GM12878 (cell line): ENCODE measurements at regions of chr19 and their contacts with region 1.

Region 1: DNA sequence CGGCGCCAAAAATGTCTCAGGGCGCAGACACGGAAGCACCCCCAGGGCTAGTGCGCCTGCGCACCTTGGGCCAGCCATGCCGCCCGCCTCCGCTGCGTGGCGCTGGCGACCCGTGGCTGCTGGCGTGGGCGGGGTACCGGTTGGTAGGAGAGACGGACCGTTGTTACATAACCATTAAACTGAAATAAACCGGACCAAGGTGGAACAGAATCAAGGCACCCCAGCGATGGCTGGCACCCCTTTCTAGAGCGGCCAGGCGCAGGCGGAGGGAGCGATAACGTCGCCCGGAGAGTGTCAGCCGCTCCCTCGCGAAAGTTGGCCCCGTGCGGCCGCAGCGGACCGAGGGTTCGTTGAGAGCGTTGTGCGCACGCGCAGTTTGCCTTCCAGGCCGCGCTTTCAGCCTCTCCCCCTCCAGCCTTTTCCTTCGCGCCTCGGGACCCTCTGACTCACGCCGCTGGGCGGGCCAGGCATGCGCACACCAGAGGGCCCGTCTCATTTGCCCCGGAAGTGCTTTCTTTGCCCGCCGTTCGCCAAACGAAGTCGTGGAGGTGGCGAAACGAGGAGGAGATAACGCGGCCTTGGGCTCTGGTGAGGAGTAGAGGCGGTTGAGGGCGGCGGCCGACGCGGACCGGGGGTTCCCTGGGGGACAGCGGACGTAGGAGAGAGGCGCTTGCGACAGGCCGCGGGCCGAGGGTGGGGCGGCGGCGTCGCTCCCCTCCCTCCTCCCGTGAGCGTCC is at the starts of genes PLEKHJ1 and SF3A2:
- DNase-seq: peak; percentile 93
- ATAC-seq: peak; percentile 83
- H3K4me3 ChIP-seq: peak within 1 kb of the TSS; percentile 99
- H3K27ac ChIP-seq: peak within 1 kb of the TSS; percentile 94
- H3K4me1 ChIP-seq: peaks cover 24% of the 10 kb centered on the region
- H3K27me3 ChIP-seq: no peaks in the 10 kb centered on the region
- CTCF ChIP-seq: peak; percentile 99 to 100 (median 99); a peak in 5 of 6 replicates
- EP300 ChIP-seq: no peak
- POLR2A ChIP-seq: peak; percentile 93
- RAD21 ChIP-seq: peak; percentile 94
- polyA plus RNA-seq, gene PLEKHJ1: 1.3 to 6.9 TPM
- polyA plus RNA-seq, gene SF3A2: 0.33 to 0.55 TPM

Region 2: DNA sequence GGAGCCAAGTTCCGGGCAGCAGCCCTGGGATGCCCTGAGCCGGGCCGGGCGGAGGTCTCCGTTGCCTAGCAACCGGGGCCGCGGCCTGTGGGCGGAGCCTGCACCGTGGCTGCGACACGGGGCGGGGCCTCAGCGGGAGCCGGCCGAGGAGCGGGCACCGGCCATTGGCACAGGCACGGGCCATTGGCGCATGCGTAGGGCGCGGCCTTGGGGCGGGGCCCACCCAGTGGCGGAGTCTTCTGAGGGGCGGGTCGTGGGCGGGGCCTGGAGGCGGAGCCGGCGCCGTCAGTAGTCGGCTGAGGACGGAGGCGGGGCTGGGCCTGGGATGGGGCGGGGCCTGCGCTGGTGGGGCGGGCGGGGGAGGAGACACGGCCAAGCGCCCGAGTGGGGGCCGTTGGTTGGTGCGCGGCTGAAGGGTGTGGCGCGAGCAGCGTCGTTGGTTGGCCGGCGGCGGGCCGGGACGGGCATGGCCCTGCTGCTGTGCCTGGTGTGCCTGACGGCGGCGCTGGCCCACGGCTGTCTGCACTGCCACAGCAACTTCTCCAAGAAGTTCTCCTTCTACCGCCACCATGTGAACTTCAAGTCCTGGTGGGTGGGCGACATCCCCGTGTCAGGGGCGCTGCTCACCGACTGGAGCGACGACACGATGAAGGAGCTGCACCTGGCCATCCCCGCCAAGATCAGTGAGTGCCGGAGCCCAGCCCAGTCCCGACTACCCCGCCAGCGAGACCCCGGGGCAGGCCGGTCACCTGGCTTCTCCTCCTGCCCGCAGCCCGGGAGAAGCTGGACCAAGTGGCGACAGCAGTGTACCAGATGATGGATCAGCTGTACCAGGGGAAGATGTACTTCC is 139.8 kb before region 1 on chr19 and contains the start of gene IZUMO4:
- CTCF ChIA-PET with region 1: no interaction called
- POLR2A ChIA-PET with region 1: interaction called, 7 read pairs
- RAD21 ChIA-PET with region 1: no interaction called
- SMC1A ChIA-PET with region 1: no interaction called
- in situ Hi-C with region 1: no loop called
- intact Hi-C with region 1: loop called (anchors 10 kb)
- DNase-seq: peak; percentile 71
- ATAC-seq: peak; percentile 83
- H3K4me3 ChIP-seq: peak within 1 kb of the TSS; percentile 93
- H3K27ac ChIP-seq: peak within 1 kb of the TSS; percentile 93
- H3K4me1 ChIP-seq: peaks cover 21% of the 10 kb centered on the region
- H3K27me3 ChIP-seq: no peaks in the 10 kb centered on the region
- CTCF ChIP-seq: peak; percentile 41 to 73 (median 54)
- EP300 ChIP-seq: no peak
- POLR2A ChIP-seq: no peak; the same call in 1 of the 2 replicates
- RAD21 ChIP-seq: no peak
- polyA plus RNA-seq, gene IZUMO4: 0.53 to 1.9 TPM

Region 3: DNA sequence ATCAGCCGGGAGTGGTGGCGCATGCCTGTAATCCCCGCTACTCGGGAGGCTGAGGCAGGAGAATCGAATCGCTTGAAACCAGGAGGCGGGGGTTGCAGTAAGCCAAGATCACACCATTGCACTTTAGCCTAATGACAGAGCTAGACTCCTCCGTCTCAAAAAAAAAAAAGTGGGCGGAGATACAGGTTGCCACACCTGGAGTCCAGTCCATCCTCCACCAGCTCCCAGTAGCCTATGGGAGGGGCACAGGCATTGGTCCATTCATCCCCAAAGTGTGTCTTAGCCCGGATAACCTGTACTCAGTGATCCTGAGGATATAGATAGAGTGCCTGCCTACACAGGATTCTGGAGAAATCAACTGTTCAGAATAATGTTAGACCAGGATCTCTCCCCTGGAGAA is 76.1 kb before region 1 on chr19:
- CTCF ChIA-PET with region 1: interaction called, 35 read pairs
- POLR2A ChIA-PET with region 1: interaction called, 4 read pairs
- RAD21 ChIA-PET with region 1: interaction called, 39 read pairs
- SMC1A ChIA-PET with region 1: interaction called, 10 read pairs
- in situ Hi-C with region 1: no loop called
- intact Hi-C with region 1: loop called (anchors 2 kb)
- DNase-seq: no peak
- ATAC-seq: no peak
- H3K4me3 ChIP-seq: no peak overlapping the region
- H3K27ac ChIP-seq: no peak overlapping the region
- H3K4me1 ChIP-seq: no peaks in the 10 kb centered on the region; the same call in 1 of the 2 replicates
- H3K27me3 ChIP-seq: no peaks in the 10 kb centered on the region
- CTCF ChIP-seq: no peak
- EP300 ChIP-seq: no peak
- POLR2A ChIP-seq: no peak
- RAD21 ChIP-seq: no peak

Region 4: DNA sequence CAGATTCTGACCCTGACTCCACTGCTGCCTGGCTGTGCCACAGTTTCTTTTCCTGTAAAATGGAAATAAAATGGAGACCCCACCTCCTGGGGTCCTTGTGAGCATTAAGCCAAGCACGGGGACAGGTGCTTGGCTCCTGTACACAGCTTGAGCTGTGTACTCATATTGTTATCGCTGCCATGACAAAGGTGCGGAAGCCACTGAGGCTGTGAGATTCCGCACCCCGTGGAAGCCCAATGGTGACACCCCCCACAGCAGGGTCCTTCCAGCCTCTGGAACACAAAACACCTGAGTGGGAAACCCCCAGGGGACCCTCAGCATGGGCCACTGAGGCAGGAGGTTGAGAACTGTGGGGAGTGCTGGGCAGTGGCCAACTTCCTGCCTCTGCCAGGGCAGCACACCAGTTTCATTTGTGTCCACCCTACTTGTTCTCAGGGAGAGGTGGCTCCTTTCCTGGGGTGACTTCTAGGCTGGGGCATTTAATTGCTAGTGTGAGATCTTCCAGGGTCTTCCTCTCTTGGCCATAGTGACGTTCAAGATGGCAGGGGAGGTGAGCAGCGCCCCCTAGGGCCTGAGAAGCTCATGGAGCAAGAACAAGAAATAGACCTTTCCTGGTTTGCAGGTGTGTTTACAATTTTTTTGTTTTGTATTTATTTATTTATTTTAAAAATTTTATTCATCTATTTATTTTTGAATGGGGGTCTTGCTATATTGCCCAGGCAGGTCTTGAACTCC is 25.1 kb after region 1 on chr19:
- CTCF ChIA-PET with region 1: interaction called, 130 read pairs
- POLR2A ChIA-PET with region 1: interaction called, 54 read pairs
- RAD21 ChIA-PET with region 1: interaction called, 72 read pairs
- SMC1A ChIA-PET with region 1: interaction called, 46 read pairs
- in situ Hi-C with region 1: no loop called
- intact Hi-C with region 1: no loop called
- DNase-seq: no peak
- ATAC-seq: peak; percentile 17; the same call in 1 of the 3 replicates
- H3K4me3 ChIP-seq: no peak overlapping the region
- H3K27ac ChIP-seq: no peak overlapping the region
- H3K4me1 ChIP-seq: peaks cover 25% of the 10 kb centered on the region
- H3K27me3 ChIP-seq: no peaks in the 10 kb centered on the region
- CTCF ChIP-seq: peak; percentile 56 to 77 (median 76)
- EP300 ChIP-seq: no peak
- POLR2A ChIP-seq: no peak
- RAD21 ChIP-seq: peak; percentile 50

Region 5: GRCh38 chr19:2315818-2316353 is 79.4 kb after region 1 on chr19:
- CTCF ChIA-PET with region 1: interaction called, 6 read pairs
- POLR2A ChIA-PET with region 1: no interaction called
- RAD21 ChIA-PET with region 1: no interaction called
- SMC1A ChIA-PET with region 1: interaction called, 4 read pairs
- in situ Hi-C with region 1: loop called (anchors 5 kb)
- intact Hi-C with region 1: no loop called
- DNase-seq: no peak
- ATAC-seq: peak; percentile 90
- H3K4me3 ChIP-seq: no peak overlapping the region
- H3K27ac ChIP-seq: no peak overlapping the region
- H3K4me1 ChIP-seq: peaks cover 3% of the 10 kb centered on the region; the same call in 1 of the 2 replicates
- H3K27me3 ChIP-seq: no peaks in the 10 kb centered on the region
- CTCF ChIP-seq: peak; percentile 43 to 61 (median 53); a peak in 4 of 6 replicates
- EP300 ChIP-seq: no peak
- POLR2A ChIP-seq: no peak
- RAD21 ChIP-seq: peak; percentile 74